HEK293 (cell line): ENCODE measurements at regions of chr22 and their contacts with region 1.

Region 1: GRCh38 chr22:36506637-36507517 is at the start of gene FOXRED2:
- H3K4me3 ChIP-seq: peak within 1 kb of the TSS; percentile 58
- H3K27ac ChIP-seq: peak within 1 kb of the TSS; percentile 85
- H3K4me1 ChIP-seq: peaks cover 3% of the 10 kb centered on the region; the same call in 1 of the 2 replicates
- CTCF ChIP-seq: no peak

Region 2: GRCh38 chr22:36156515-36157419 is 350.1 kb before region 1 on chr22:
- CTCF ChIA-PET with region 1: no interaction called
- POLR2A ChIA-PET with region 1: no interaction called
- H3K4me3 ChIP-seq: no peak overlapping the region
- H3K27ac ChIP-seq: no peak overlapping the region
- H3K4me1 ChIP-seq: no peaks in the 10 kb centered on the region
- CTCF ChIP-seq: no peak

Region 3: GRCh38 chr22:36520423-36520822 is 13.5 kb after region 1 on chr22:
- CTCF ChIA-PET with region 1: interaction called, 45 read pairs
- POLR2A ChIA-PET with region 1: interaction called, 21 read pairs
- H3K4me3 ChIP-seq: no peak overlapping the region
- H3K27ac ChIP-seq: no peak overlapping the region
- H3K4me1 ChIP-seq: no peaks in the 10 kb centered on the region
- CTCF ChIP-seq: no peak

Region 4: DNA sequence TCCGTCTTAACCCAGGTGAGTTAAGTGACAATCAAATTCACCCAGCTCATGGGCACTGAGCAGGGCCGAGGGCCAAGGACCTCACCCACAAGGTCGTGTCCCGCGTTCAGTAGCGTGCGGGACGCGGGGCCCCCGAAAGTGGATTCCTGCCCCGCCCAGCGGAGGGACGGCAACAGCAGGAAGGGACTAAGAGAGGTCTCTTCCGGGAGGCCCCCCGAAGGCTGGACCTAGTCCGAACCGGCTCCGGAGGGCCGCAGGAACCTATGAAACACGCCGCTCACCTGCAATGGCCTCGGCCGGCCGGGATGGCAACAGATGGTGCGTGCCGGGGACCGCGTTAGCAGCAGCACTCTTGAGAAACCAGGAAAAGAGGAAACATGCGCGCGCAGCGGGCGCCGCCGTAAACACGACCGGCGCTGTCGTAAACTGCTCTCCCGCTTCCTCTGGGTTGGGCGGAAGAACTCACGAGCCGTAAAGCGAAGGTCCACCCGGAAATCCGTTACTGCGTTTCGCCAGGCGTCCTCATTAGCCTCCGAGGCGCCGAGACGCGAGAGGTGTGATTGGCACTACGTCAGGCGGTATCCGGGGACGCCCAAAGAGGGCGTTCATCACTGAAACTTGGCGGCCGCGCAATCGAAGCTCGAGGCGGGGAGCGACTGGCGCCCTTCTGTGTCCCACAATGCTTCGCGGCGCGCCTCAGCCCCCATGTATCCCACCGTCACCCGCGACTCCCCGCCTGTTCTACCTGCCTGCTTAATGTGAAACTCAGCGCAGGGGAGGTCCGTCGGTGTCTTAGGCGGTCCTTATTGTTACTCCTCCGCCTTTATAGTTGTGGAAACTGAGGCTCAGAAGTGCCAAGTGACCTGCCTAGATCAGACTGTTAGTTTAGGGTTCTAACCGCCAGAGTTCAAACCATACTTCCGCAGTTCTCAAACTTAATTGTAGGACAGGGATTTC is 22.2 kb after region 1 on chr22 and contains the start of gene EIF3D:
- CTCF ChIA-PET with region 1: interaction called, 45 read pairs
- POLR2A ChIA-PET with region 1: interaction called, 35 read pairs
- H3K4me3 ChIP-seq: peak within 1 kb of the TSS; percentile 94
- H3K27ac ChIP-seq: peak within 1 kb of the TSS; percentile 98
- H3K4me1 ChIP-seq: 0 out of 2 replicates have a peak, but pooled peaks cover 5% of the 10 kb centered on the region
- CTCF ChIP-seq: peak; percentile 18; the same call in 1 of the 2 replicates